ENCODE measurements at regions of chr20 and their contacts with region 1.

Region 1: DNA sequence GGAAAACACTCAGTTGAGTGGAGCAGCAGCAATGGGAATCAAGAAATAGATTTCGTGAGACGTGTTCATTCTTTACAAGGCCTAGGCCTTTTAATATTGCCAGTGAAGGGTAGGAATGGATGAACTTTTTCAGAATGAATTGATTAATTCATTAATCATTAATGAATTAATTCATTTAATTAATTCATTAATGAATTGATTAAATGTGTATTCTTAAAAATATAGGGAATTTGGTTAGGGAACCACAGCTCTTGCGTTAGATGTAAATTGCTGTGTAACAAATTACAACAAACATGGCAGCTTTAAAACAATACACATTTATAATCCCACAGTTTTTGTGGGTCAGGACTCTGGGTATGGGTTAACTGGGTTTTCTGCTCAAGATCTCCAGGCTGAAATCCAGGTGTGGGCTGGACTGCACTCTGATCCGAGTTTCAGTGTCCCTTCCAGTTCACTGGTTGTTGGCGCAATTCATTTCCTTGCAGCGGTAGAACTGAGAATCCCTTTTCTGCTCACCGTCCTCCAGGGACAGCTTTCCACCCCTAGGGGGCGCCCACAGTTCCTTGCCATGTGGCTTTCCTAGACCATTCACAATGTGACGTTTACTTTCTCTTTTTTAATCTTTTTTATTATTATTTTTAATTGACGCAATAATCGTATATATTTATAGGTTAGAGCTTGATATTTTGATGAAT is 32.8 kb upstream of the BCAS1 start:
- DNase-seq: peak; percentile 72
- ATAC-seq: peak; percentile 91
- H3K4me3 ChIP-seq: no peak overlapping the region
- H3K27ac ChIP-seq: no peak overlapping the region
- H3K4me1 ChIP-seq: peaks cover 30 to 55% of the 10 kb centered on the region in 2 experiments
- H3K27me3 ChIP-seq: no peaks in the 10 kb centered on the region
- CTCF ChIP-seq: peak; percentile 77 to 94 (median 80)
- POLR2A ChIP-seq: no peak
- RAD21 ChIP-seq: peak; percentile 77

Region 2: GRCh38 chr20:54115151-54115854 is 12.1 kb after region 1 on chr20:
- CTCF ChIA-PET with region 1: interaction called, 17 read pairs
- POLR2A ChIA-PET with region 1: no interaction called
- RAD21 ChIA-PET with region 1: no interaction called
- intact Hi-C with region 1: no loop called
- DNase-seq: no peak
- ATAC-seq: no peak
- H3K4me3 ChIP-seq: no peak overlapping the region
- H3K27ac ChIP-seq: 0 out of 2 replicates have a peak overlapping the region, but pooled peaks have one; percentile 6
- H3K4me1 ChIP-seq: peaks cover 14 to 51% of the 10 kb centered on the region in 2 experiments; a peak in 3 of 4 replicates
- H3K27me3 ChIP-seq: no peaks in the 10 kb centered on the region
- CTCF ChIP-seq: no peak
- POLR2A ChIP-seq: no peak
- RAD21 ChIP-seq: no peak

Region 3: DNA sequence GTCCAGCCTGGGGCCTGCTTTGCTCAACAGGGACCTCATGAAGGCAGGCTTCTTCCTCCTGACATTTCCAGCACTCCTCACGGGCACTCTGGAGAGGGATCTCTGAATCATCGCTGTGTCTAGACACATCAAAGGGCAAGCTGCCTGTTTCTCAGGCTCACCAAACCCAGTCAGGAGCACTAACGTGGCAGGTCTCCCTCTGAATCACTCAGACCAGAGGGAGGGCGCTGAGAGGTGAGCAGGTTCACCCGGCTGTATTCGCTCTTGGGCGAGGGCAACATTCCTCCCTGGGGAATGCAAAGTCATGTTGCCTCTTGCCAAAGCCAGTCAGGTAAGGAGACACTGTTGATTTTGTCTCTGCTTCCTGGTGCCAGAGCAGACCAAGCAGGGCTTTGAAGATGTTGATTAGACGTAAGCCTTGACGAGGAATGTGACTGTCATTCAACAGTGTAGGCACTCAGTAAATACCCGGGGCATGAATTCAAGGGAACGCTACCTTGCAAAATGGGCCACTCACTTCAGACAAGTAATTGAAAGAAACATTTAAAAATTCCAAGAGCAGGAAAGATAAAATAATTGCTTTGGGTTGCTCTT is 20.5 kb after region 1 on chr20:
- CTCF ChIA-PET with region 1: interaction called, 14 read pairs
- POLR2A ChIA-PET with region 1: interaction called, 5 read pairs
- RAD21 ChIA-PET with region 1: no interaction called
- intact Hi-C with region 1: no loop called
- DNase-seq: peak; percentile 100
- ATAC-seq: peak; percentile 95
- H3K4me3 ChIP-seq: 0 out of 4 replicates have a peak overlapping the region, but pooled peaks of 1 of the 2 experiments have one; percentile 4
- H3K27ac ChIP-seq: peak overlapping the region; percentile 96
- H3K4me1 ChIP-seq: peaks cover 60 to 90% of the 10 kb centered on the region in 2 experiments
- H3K27me3 ChIP-seq: no peaks in the 10 kb centered on the region
- CTCF ChIP-seq: no peak
- POLR2A ChIP-seq: no peak
- RAD21 ChIP-seq: peak; percentile 8; the same call in 1 of the 2 replicates

Region 4: GRCh38 chr20:54132612-54133433 is 29.6 kb after region 1 on chr20:
- CTCF ChIA-PET with region 1: interaction called, 14 read pairs
- POLR2A ChIA-PET with region 1: no interaction called
- RAD21 ChIA-PET with region 1: no interaction called
- intact Hi-C with region 1: no loop called
- DNase-seq: peak; percentile 92
- ATAC-seq: peak; percentile 76
- H3K4me3 ChIP-seq: peak overlapping the region in 1 of 2 experiments; percentile 2; a peak in 1 of 4 replicates
- H3K27ac ChIP-seq: peak overlapping the region; percentile 98
- H3K4me1 ChIP-seq: peaks cover 55 to 80% of the 10 kb centered on the region in 2 experiments
- H3K27me3 ChIP-seq: no peaks in the 10 kb centered on the region
- CTCF ChIP-seq: no peak
- POLR2A ChIP-seq: peak; percentile 18
- RAD21 ChIP-seq: peak; percentile 3; the same call in 1 of the 2 replicates

Region 5: GRCh38 chr20:54167909-54168872 is 65.0 kb after region 1 on chr20:
- CTCF ChIA-PET with region 1: interaction called, 15 read pairs
- POLR2A ChIA-PET with region 1: no interaction called
- RAD21 ChIA-PET with region 1: no interaction called
- intact Hi-C with region 1: no loop called
- DNase-seq: peak; percentile 81
- ATAC-seq: peak; percentile 57
- H3K4me3 ChIP-seq: peak overlapping the region; percentile 40 to 50
- H3K27ac ChIP-seq: peak overlapping the region; percentile 94
- H3K4me1 ChIP-seq: peaks cover 70 to 76% of the 10 kb centered on the region in 2 experiments
- H3K27me3 ChIP-seq: no peaks in the 10 kb centered on the region
- CTCF ChIP-seq: no peak
- POLR2A ChIP-seq: no peak
- RAD21 ChIP-seq: no peak

Region 6: GRCh38 chr20:54173653-54174456 is 70.6 kb after region 1 on chr20 and contains the start of gene CYP24A1:
- CTCF ChIA-PET with region 1: interaction called, 15 read pairs
- POLR2A ChIA-PET with region 1: interaction called, 3 read pairs
- RAD21 ChIA-PET with region 1: no interaction called
- intact Hi-C with region 1: no loop called
- DNase-seq: no peak
- ATAC-seq: peak; percentile 53
- H3K4me3 ChIP-seq: peak within 1 kb of the TSS; percentile 41 to 51
- H3K27ac ChIP-seq: peak within 1 kb of the TSS; percentile 94
- H3K4me1 ChIP-seq: peaks cover 87 to 99% of the 10 kb centered on the region in 2 experiments
- H3K27me3 ChIP-seq: no peaks in the 10 kb centered on the region
- CTCF ChIP-seq: no peak
- POLR2A ChIP-seq: peak; percentile 99
- RAD21 ChIP-seq: no peak
- total RNA-seq, gene CYP24A1: 267 TPM

Region 7: DNA sequence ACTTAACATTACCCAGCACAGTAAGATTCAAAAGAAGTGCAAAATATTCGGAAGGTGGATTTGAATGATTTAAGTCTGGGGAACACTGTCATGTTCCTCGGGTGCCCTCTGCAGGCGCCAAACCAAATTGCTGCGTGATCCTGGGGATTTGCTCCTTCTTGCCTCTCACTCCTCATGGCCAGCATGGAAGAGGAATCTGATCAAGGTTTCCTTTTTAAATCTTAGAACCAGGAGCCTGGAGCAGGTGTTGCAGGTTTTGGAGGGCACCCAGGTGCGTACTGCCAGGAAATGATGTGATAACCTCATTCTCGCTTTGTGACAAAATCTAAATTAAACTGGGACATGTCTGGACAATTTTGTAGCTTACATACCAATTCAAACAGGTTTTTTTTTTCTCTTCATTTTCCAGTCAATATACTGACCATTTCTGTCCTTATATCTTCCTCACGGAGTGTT is 96.5 kb after region 1 on chr20:
- CTCF ChIA-PET with region 1: interaction called, 162 read pairs
- POLR2A ChIA-PET with region 1: interaction called, 4 read pairs
- RAD21 ChIA-PET with region 1: interaction called in 1 of 2 experiments, 3 read pairs
- intact Hi-C with region 1: no loop called
- DNase-seq: peak; percentile 71
- ATAC-seq: peak; percentile 60
- H3K4me3 ChIP-seq: no peak overlapping the region
- H3K27ac ChIP-seq: no peak overlapping the region; the same call in 1 of the 2 replicates
- H3K4me1 ChIP-seq: peaks cover 39 to 52% of the 10 kb centered on the region in 2 experiments
- H3K27me3 ChIP-seq: no peaks in the 10 kb centered on the region
- CTCF ChIP-seq: peak; percentile 77 to 95 (median 93)
- POLR2A ChIP-seq: no peak
- RAD21 ChIP-seq: peak; percentile 94